ENCODE measurements at regions of chr3 and their contacts with region 1.

Region 1: DNA sequence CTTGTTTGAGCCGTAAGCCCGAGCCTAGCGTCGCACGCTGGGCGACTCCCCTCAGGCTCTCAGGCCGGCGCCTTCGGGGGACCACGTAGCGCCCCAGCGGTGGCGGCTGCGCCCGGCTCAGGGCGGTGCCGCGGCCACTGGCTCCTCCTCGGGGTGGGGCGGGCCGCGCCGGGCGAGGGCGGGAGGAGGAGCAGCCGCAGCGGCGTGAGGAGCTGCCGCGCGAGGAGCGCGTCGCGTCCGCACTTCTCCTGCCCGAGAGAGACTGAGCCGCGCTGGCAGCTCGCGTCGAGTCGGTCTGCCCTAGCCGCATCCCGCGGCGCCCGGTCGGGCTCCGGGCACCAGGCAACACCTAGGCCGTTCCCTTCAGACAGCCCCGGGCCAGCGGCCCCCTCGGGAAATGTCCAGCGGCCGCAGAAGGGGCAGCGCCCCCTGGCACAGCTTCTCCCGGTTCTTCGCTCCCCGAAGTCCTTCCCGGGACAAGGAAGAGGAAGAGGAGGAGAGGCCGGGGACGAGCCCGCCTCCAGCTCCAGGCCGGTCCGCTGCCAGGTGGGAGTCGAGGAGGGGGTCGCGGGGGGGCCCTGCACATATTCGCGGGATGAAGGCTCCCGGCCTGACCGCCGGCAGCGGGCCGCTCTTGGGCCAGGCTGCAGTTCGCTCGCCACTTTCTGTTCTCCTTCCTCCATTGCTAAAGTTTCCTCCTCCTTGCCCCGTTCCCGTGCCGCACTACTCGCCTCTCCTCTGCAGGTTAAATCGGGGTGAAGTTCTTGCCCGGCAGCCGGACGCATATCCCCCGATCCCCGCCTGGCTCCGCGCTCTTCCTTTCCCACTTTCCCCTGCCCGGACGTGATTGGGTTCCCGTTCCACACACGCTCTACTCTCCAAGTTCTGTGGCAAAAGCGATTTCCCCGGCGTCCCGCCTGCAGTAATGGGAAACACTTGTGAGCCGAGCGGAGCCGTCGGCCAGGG is at the start of gene CRYBG3:
- DNase-seq: peak; percentile 86
- ATAC-seq: peak; percentile 94
- H3K4me3 ChIP-seq: peak within 1 kb of the TSS; percentile 80
- H3K27ac ChIP-seq: no peak within 1 kb of the TSS
- H3K4me1 ChIP-seq: peaks cover 15% of the 10 kb centered on the region; the same call in 1 of the 2 replicates
- H3K27me3 ChIP-seq: no peaks in the 10 kb centered on the region
- CTCF ChIP-seq: peak; percentile 53
- total RNA-seq, gene CRYBG3: 11.4 and 12.2 TPM in 2 replicates

Region 2: DNA sequence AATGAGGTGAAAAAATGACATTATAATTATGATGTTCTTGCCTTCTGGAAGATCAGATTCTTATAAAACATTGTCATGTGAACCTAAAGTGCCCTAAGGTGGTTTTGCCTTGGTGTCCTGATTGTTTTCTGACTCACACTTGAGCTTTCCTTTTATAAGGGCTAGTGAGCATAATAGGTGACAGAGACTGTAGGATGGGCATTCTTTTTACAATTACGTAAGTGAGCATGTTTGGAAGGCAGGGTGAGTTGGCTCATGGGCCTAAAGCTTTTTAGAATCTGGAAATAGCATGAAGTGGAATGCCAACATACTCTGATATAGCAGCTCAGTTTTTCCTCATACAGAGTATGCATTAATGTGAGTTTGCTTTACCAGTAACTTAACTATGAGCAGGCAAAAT is 40.9 kb after region 1 on chr3:
- CTCF ChIA-PET with region 1: no interaction called
- POLR2A ChIA-PET with region 1: no interaction called
- intact Hi-C with region 1: loop called (anchors 2 kb)
- DNase-seq: peak; percentile 92
- ATAC-seq: peak; percentile 99
- H3K4me3 ChIP-seq: no peak overlapping the region
- H3K27ac ChIP-seq: peak overlapping the region; percentile 56
- H3K4me1 ChIP-seq: peaks cover 17% of the 10 kb centered on the region
- H3K27me3 ChIP-seq: no peaks in the 10 kb centered on the region
- CTCF ChIP-seq: no peak

Region 3: GRCh38 chr3:97871801-97872524 is 49.9 kb after region 1 on chr3:
- CTCF ChIA-PET with region 1: no interaction called
- POLR2A ChIA-PET with region 1: interaction called, 4 read pairs
- intact Hi-C with region 1: loop called (anchors 1 kb)
- DNase-seq: peak; percentile 98
- ATAC-seq: peak; percentile 96
- H3K4me3 ChIP-seq: peak overlapping the region; percentile 45; the same call in 1 of the 2 replicates
- H3K27ac ChIP-seq: peak overlapping the region; percentile 87
- H3K4me1 ChIP-seq: peaks cover 25% of the 10 kb centered on the region
- H3K27me3 ChIP-seq: no peaks in the 10 kb centered on the region
- CTCF ChIP-seq: no peak

Region 4: DNA sequence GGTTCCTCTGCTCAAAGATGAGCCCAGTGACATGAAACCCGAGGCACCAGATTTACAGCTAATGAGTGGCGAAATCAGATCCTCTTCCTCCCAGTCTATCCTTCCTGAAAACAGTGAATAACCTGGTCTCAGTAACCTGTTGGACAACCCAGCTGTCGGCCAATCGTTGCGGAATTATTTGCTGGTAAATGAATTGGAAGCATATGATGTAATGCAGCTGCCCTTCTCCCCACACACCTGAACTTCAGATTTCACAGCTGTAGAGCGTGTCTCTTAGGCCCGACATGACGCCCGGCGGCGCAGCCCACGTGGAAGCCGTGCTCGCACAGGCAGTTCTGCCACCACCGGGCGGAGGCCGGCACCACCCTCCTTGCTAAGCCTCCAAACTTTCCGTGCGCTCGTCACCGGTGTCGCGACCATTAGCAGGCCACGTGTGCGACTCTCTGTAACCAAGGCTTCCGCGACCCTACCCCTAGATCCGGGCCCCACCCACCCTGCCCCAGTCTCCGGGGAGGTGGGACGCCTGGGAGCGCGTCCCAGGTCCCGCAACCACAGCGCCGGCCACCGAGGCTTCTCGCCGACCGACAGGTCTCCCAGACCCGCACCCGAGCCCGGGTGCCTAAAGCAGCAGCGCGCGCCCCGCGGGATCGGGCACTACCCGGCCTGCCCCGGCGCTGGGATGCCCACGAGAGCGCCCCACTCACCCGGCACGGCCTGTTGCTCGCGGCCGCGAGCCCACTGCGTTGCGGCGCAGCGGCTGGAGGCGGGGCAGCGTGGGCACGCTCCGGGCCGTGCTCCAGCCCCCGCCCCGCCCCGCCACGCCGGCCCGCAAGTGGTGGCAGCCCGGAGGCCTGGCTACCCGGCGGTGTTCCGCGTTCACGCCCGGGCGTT is 149.8 kb after region 1 on chr3 and contains the start of gene RIOX2:
- CTCF ChIA-PET with region 1: interaction called, 4 read pairs
- POLR2A ChIA-PET with region 1: no interaction called
- intact Hi-C with region 1: loop called (anchors 2 kb)
- DNase-seq: peak; percentile 82
- ATAC-seq: peak; percentile 88
- H3K4me3 ChIP-seq: peak within 1 kb of the TSS; percentile 75
- H3K27ac ChIP-seq: peak within 1 kb of the TSS; percentile 40
- H3K4me1 ChIP-seq: peaks cover 22% of the 10 kb centered on the region
- H3K27me3 ChIP-seq: no peaks in the 10 kb centered on the region
- CTCF ChIP-seq: no peak
- total RNA-seq, gene RIOX2: 31.0 and 46.4 TPM in 2 replicates

Measured in PC-3 (cell line).